Endothelial cell of umbilical vein (primary cell): ENCODE measurements at regions of chr14 and their contacts with region 1.

Region 1: DNA sequence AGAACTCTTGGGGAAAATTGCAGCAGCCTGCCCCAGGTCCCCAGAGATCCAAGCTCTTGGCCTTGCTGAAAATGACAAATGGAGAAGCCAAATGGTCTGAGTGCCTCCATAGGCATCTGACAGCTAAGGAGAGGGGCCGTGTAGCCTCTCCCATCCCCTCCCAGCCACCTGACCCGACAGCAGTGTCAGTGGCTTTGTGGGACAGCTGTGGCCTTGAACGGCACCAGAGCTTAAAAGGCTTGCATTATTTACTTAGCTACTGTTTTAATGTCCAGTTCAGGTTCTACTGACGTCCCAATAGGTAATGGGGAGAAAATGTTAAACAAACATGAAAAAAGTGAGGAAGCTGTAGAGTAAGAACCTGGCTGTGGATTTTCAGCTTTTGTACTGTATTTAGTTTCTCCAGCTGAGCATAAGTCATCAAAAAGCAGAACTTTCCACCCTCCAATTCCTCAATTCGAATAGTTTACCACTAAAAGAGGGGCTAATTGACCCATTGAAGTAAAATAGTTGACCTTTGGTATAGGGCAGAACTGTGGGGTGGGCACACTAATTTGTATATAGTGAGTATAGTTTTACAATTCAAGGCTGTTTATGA is 50.0 kb downstream of the FOS start:
- DNase-seq: no peak
- H3K4me3 ChIP-seq: no peak overlapping the region
- H3K27ac ChIP-seq: no peak overlapping the region
- H3K4me1 ChIP-seq: no peaks in the 10 kb centered on the region
- H3K27me3 ChIP-seq: peaks cover 20 to 21% of the 10 kb centered on the region in 2 experiments
- CTCF ChIP-seq: no peak
- POLR2A ChIP-seq: no peak

Region 2: DNA sequence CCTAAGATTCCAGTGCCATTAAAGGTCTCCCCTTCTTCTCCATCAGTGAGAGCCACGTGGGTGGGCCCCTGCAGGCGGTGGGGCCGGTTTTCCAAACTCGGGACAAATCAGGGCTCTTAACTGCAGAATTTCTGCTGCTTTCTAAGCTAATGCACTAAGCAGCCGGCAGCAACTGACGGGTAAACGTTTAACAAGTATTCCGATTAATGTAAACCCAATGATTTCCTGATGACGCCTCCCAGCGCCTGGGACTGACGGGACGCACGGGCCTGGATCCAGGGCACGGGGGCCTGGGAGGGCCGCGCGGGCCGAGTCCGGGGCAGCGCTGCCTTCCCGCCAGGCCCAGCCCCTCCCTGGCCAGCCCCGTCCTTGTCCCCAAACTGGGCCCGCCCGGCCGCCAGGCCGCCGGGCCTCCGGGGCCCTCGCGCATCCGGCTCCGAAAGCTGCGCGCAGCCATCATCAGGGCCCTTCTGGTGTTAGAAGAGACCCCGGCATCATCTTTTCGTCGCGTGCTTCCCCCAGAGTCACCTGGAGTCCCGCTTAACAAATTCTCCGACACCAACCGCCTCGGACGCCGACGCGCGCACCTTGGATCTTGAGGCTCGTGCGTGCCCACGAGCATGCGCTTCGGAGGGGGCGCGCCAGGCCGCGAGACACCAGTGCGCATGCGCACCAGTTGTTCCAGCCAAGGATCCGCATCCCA is 277.7 kb before region 1 on chr14 and contains the start of gene MLH3:
- CTCF ChIA-PET with region 1: no interaction called
- POLR2A ChIA-PET with region 1: no interaction called
- dilution Hi-C with region 1: no loop called
- intact Hi-C with region 1: no loop called
- DNase-seq: peak; percentile 85
- H3K4me3 ChIP-seq: peak within 1 kb of the TSS; percentile 21 to 47 (median 38)
- H3K27ac ChIP-seq: peak within 1 kb of the TSS; percentile 50
- H3K4me1 ChIP-seq: peaks cover 11% of the 10 kb centered on the region
- H3K27me3 ChIP-seq: no peaks in the 10 kb centered on the region
- CTCF ChIP-seq: no peak
- POLR2A ChIP-seq: peak; percentile 68
- total RNA-seq, gene MLH3: 14.6 and 16.5 TPM in 2 replicates

Region 3: GRCh38 chr14:75258615-75259466 is 69.8 kb before region 1 on chr14:
- CTCF ChIA-PET with region 1: no interaction called
- POLR2A ChIA-PET with region 1: no interaction called
- dilution Hi-C with region 1: no loop called
- intact Hi-C with region 1: no loop called
- DNase-seq: peak; percentile 100
- H3K4me3 ChIP-seq: peak overlapping the region in 2 of 3 experiments; percentile 21 to 39
- H3K27ac ChIP-seq: peak overlapping the region; percentile 75
- H3K4me1 ChIP-seq: peaks cover 32% of the 10 kb centered on the region
- H3K27me3 ChIP-seq: no peaks in the 10 kb centered on the region
- CTCF ChIP-seq: no peak
- POLR2A ChIP-seq: peak; percentile 7

Region 4: GRCh38 chr14:75350505-75351060 is 21.9 kb after region 1 on chr14:
- CTCF ChIA-PET with region 1: no interaction called
- POLR2A ChIA-PET with region 1: no interaction called
- dilution Hi-C with region 1: no loop called
- intact Hi-C with region 1: no loop called
- DNase-seq: no peak
- H3K4me3 ChIP-seq: no peak overlapping the region
- H3K27ac ChIP-seq: no peak overlapping the region
- H3K4me1 ChIP-seq: no peaks in the 10 kb centered on the region
- H3K27me3 ChIP-seq: peaks cover 6 to 8% of the 10 kb centered on the region in 2 experiments
- CTCF ChIP-seq: no peak
- POLR2A ChIP-seq: no peak

Region 5: DNA sequence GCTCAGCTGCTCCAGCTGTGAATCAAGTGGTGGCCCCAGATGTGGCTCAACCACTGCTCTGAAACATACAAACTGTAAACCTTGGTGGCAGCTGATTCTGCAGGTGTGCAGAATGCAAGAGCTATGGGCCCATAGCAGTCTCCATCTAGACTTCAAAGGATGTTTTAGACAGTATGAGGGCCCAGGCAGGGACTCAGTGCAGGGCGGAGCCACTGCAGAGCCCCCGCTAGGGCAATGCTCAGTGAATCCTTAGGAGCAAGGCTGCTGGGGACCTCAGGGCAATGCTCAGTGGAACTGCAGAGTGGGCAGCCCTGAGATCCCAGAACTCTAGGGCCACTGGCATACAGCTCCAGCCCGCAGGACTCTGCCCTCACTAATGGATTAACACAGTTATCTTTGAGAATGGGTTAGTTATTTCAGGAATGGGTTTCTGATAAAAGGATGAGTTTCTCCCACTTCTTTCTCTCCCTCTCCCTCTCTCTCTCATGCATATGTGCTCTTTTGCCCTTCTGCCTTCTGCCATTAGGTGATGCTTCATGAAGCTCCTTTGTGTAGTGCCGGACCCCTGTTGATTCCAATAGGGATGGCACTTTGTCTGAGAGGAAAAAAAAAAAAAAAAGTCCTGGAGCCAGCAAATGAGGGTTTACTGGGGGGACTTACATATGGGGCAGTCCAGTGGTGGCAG is 50.7 kb after region 1 on chr14:
- CTCF ChIA-PET with region 1: no interaction called
- POLR2A ChIA-PET with region 1: no interaction called
- dilution Hi-C with region 1: no loop called
- intact Hi-C with region 1: no loop called
- DNase-seq: no peak
- H3K4me3 ChIP-seq: no peak overlapping the region
- H3K27ac ChIP-seq: no peak overlapping the region
- H3K4me1 ChIP-seq: no peaks in the 10 kb centered on the region
- H3K27me3 ChIP-seq: peaks cover 4 to 12% of the 10 kb centered on the region in 2 experiments
- CTCF ChIP-seq: no peak
- POLR2A ChIP-seq: no peak

Region 6: GRCh38 chr14:75389679-75390078 is 61.0 kb after region 1 on chr14:
- CTCF ChIA-PET with region 1: no interaction called
- POLR2A ChIA-PET with region 1: no interaction called
- dilution Hi-C with region 1: no loop called
- intact Hi-C with region 1: loop called (anchors 5 kb)
- DNase-seq: no peak
- H3K4me3 ChIP-seq: no peak overlapping the region
- H3K27ac ChIP-seq: no peak overlapping the region
- H3K4me1 ChIP-seq: no peaks in the 10 kb centered on the region
- H3K27me3 ChIP-seq: peaks cover 19 to 36% of the 10 kb centered on the region in 2 experiments
- CTCF ChIP-seq: no peak
- POLR2A ChIP-seq: no peak